Transverse colon (tissue), 4 donors: ENCODE measurements at regions of chr2 and their contacts with region 1.

Region 1: DNA sequence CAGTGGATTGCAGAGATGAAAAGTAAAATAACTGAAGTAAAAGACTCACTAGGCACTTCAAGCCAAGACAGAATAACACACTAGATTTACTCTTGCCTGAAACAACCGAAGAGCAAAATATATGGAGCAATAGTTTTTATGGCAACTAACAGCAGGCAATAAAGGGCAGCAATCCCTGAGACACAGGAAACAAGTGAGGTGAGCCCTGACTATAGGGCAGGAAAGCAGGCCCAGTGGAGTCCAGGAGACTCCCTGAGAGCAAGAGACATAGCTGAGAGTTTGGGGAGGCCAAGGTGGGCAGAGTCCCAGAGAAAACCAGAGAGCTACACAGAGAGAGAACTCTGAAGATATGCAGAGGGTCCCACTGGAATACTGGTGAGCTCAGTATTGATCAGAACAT is 18.8 kb downstream of the FARSB start:
- DNase-seq: peak; percentile 44
- H3K4me3 ChIP-seq: no peak overlapping the region
- H3K27ac ChIP-seq: peak overlapping the region; percentile 50 to 74 (median 64)
- H3K4me1 ChIP-seq: peaks cover 0 to 18% (median 6%) of the 10 kb centered on the region in 4 donors
- H3K27me3 ChIP-seq: no peaks in the 10 kb centered on the region
- CTCF ChIP-seq: no peak
- EP300 ChIP-seq: no peak
- POLR2A ChIP-seq: no peak

Region 2: DNA sequence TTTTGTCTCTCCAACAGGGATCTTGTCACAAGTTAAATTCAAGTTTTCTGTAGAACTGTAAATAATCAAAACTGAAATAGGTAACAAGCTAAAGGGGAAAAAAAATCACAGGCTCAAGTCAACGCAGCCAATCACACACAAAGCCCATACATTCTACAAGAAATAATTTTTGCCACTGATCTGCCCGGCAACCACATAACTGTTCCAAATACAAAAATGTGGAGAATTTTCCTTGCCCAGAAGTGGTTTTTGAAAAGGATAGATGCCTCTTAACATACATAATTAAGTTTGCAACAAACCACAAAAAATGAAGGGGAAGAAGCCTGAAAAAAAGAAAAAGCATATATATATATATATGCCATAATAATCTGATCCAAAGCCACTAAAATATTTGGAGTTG is 41.5 kb before region 1 on chr2:
- in situ Hi-C with region 1: no loop called
- intact Hi-C with region 1: no loop called
- DNase-seq: no peak
- H3K4me3 ChIP-seq: no peak overlapping the region
- H3K27ac ChIP-seq: peak overlapping the region in 3 of 4 donors; percentile 43 to 65 (median 64)
- H3K4me1 ChIP-seq: peaks cover 3 to 36% (median 11%) of the 10 kb centered on the region in 4 donors
- H3K27me3 ChIP-seq: no peaks in the 10 kb centered on the region
- CTCF ChIP-seq: no peak
- EP300 ChIP-seq: no peak
- POLR2A ChIP-seq: no peak

Region 3: DNA sequence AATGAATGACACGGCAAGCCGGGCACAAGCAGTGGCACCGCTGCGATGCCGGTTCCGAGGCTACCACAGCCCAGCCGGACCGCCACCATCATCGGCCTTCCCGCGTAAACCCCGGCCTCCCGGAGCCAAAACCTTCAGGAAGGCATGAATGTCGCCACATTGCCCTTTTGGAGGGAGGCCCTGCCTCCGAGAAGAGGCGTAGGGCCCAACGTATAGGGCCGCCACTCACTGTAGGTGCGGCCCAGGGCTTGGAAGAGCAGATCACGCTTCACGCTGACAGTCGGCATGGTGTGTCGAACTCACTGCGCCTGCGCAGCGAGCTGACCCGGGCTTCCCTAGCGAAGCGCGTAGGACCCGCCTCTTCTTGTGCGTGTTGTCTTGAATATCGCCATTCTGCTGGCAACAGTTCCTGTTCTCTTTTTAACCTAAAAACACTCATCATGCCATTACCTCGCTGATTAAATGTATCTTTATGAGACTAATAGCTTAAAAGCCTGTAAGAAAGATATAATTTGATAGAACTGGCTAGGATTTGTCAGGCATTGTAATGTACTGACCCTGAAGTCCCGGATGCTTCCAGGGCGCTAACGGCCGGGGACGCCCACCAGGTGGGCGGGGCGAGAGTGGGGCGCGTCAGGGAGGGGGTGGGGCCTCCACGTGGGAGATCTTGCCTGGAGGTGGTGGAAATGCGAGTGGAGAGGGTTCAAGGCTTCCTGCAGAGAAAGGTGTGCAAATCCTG is 18.9 kb after region 1 on chr2 and contains the start of gene FARSB:
- in situ Hi-C with region 1: no loop called
- intact Hi-C with region 1: no loop called
- DNase-seq: peak; percentile 95
- H3K4me3 ChIP-seq: peak within 1 kb of the TSS; percentile 51 to 87 (median 76)
- H3K27ac ChIP-seq: peak within 1 kb of the TSS; percentile 84 to 92 (median 87)
- H3K4me1 ChIP-seq: peaks cover 14 to 45% (median 36%) of the 10 kb centered on the region in 4 donors
- H3K27me3 ChIP-seq: no peaks in the 10 kb centered on the region
- CTCF ChIP-seq: no peak
- EP300 ChIP-seq: no peak
- POLR2A ChIP-seq: peak; percentile 76
- total RNA-seq, gene FARSB: 7.2 to 18.6 (median 9.5) TPM

Region 4: GRCh38 chr2:223197046-223197445 is 560.0 kb after region 1 on chr2:
- in situ Hi-C with region 1: no loop called
- intact Hi-C with region 1: loop called (anchors 5 kb)
- DNase-seq: no peak
- H3K4me3 ChIP-seq: no peak overlapping the region
- H3K27ac ChIP-seq: no peak overlapping the region
- H3K4me1 ChIP-seq: no peaks in the 10 kb centered on the region
- H3K27me3 ChIP-seq: no peaks in the 10 kb centered on the region
- CTCF ChIP-seq: no peak
- EP300 ChIP-seq: no peak
- POLR2A ChIP-seq: no peak